ENCODE measurements at regions of chr3 and their contacts with region 1.

Region 1: GRCh38 chr3:50337191-50337841 is 3.3 kb downstream of the RASSF1 start:
- H3K4me3 Mint-ChIP-seq: peak overlapping the region; percentile 78
- H3K27ac Mint-ChIP-seq: peak overlapping the region; percentile 96
- H3K4me1 Mint-ChIP-seq: peaks cover 54% of the 10 kb centered on the region
- H3K27me3 Mint-ChIP-seq: no peaks in the 10 kb centered on the region

Region 2: DNA sequence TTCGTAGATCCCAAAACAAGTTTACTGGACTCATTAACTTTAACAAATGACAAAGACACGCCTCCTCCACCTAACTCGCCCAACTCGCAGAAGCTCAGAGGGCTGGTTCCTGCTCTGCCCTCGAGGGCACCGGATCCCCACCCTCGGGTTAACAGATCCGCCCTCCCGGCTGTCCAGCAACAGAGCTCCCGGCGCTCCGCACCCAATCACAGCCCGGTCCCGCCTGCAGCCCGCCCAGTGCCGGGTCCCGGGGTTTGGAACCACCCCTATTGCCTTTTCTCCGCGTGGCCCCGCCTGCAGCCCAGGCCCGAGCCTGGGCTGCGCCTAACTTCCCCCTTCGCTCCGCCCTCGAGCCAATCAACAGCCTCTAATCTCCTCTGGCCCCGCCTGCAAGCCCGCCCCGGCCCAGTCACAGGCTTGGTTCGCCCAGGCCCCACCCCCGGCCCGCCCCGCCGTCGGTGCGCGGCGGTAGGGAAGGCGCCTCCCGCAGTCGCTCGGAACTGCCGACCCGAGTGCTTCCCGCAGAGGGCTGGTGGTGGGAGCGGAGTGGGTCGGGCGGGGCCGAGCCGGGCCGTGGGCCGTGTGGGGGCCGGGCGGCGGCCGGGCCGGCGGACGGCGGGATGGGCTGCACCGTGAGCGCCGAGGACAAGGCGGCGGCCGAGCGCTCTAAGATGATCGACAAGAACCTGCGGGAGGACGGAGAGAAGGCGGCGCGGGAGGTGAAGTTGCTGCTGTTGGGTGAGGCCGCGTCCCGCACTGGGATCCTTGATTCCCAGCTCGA is 101.4 kb before region 1 on chr3 and contains the start of gene GNAI2:
- intact Hi-C with region 1: loop called (anchors 5 kb)
- H3K4me3 Mint-ChIP-seq: peak within 1 kb of the TSS; percentile 99
- H3K27ac Mint-ChIP-seq: peak within 1 kb of the TSS; percentile 97
- H3K4me1 Mint-ChIP-seq: peaks cover 70% of the 10 kb centered on the region
- H3K27me3 Mint-ChIP-seq: no peaks in the 10 kb centered on the region

Region 3: GRCh38 chr3:50292159-50293078 is 44.9 kb before region 1 on chr3 and contains the start of gene IFRD2:
- intact Hi-C with region 1: loop called (anchors 1 kb)
- H3K4me3 Mint-ChIP-seq: peak within 1 kb of the TSS; percentile 76
- H3K27ac Mint-ChIP-seq: peak within 1 kb of the TSS; percentile 80
- H3K4me1 Mint-ChIP-seq: peaks cover 18% of the 10 kb centered on the region
- H3K27me3 Mint-ChIP-seq: no peaks in the 10 kb centered on the region

Region 4: GRCh38 chr3:50572158-50572557 is 234.8 kb after region 1 on chr3:
- intact Hi-C with region 1: no loop called
- H3K4me3 Mint-ChIP-seq: peak overlapping the region; percentile 26
- H3K27ac Mint-ChIP-seq: peak overlapping the region; percentile 97
- H3K4me1 Mint-ChIP-seq: peaks cover 80% of the 10 kb centered on the region
- H3K27me3 Mint-ChIP-seq: no peaks in the 10 kb centered on the region